ENCODE measurements at regions of chr11 and their contacts with region 1.

Region 1: GRCh38 chr11:60831143-60831500 is 10.8 kb upstream of the CCDC86 start:
- DNase-seq: peak; percentile 92
- ATAC-seq: peak; percentile 90

Region 2: DNA sequence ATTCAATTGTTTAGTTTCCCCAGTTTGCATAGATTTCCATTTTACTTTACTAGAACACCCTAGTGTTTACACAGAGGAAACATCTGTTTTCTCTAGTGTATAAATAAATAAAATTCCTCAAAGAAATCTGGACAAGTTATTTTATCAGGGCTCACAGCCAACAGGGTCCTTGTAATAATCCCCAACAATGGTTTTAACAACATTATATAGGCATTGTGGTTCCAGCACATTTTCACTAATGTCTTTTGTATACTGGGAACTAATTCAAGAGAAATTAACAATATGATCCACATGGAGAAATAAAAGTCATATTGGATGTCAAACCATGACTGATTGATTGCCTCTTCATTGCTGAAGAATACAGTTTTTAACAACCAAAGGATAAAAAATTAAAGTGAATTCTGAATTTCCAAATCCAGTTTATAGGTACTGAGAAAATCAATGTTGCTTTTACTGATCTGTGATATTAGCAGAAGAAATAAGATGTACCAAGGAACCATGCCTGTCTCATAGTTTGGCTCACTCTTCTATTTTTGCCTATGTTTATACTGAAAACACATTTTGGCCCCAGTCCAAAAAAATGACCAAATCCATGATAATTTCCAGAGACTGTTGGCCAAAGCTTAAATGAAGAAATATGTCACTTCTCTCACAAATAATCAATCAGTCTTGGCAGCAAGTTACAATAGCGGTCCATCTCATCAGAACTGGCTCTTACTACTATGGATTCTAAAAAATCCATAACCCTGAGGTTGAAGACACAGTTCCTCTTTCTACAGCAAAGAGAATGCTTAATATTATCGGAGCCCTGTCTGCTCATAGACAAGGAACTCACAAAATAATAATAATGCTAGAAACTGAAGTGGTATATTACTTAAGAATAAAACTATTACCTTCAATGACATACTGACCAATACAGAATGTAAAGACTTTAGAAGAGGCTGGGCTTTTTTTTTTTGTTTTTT is 317.3 kb before region 1 on chr11:
- intact Hi-C with region 1: no loop called
- DNase-seq: no peak
- ATAC-seq: no peak

Region 3: DNA sequence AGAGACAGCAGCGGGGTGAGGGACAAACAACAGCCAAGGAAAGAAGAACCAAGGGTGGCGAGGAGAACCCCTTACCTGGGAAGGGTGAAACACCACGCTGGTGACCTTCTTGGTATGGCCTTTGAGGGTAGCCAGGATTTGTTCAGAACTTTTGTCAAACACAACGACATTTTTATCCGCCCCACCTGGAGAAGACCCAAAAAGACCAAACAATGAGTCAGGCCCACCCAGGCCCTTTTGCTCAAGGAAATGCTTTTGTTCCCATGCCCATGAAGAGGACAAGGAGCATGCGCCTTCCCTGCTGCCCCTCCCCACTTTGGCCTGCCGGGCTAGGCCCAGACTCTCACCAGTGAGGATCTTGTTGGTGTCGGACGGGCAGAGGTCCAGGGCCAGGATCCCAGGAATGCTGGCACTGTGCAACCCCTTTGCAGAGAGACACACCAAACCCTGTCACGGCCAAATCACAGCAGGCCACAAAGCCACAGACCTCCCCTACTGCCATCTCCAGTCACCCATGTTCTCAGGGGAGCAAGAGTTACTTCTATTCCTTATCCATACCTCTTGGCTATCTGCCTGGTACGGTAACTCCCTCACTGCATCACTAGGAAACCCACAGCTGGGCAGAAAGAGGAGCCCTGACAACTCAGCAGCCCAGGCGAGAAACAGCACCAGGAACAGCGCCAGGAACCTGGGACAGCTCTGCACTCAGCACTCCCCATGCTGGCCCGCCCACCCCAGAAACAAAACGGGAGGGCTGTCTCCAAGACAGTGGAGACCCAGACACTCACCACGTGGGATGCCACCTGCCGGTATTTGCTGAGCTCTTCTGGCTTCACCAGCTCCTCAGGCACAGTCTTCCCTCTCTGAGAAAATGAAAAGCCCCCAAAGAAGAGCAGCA is 69.6 kb after region 1 on chr11:
- intact Hi-C with region 1: loop called (anchors 5 kb)
- DNase-seq: peak; percentile 48
- ATAC-seq: peak; percentile 34

Region 4: GRCh38 chr11:61187505-61188130 is 356.5 kb after region 1 on chr11:
- intact Hi-C with region 1: loop called (anchors 5 kb)
- DNase-seq: peak; percentile 76
- ATAC-seq: peak; percentile 66

Measured in left ventricle myocardium superior (tissue), 1 donor.